Activated CD4-positive, alpha-beta T cell treated with anti-CD3 and anti-CD28 coated beads for 36 hours (primary cell): ENCODE measurements at regions of chr17 and their contacts with region 1.

Region 1: GRCh38 chr17:59512844-59513385 is 52.5 kb upstream of the DHX40 start:
- DNase-seq: no peak
- ATAC-seq: no peak
- H3K4me3 Mint-ChIP-seq: no peak overlapping the region
- H3K27ac Mint-ChIP-seq: no peak overlapping the region
- H3K4me1 Mint-ChIP-seq: no peaks in the 10 kb centered on the region
- H3K27me3 Mint-ChIP-seq: no peaks in the 10 kb centered on the region

Region 2: GRCh38 chr17:58382108-58382871 is 1130.6 kb before region 1 on chr17:
- CTCF ChIA-PET with region 1: no interaction called
- POLR2A ChIA-PET with region 1: interaction called, 11 read pairs
- intact Hi-C with region 1: no loop called
- DNase-seq: no peak
- ATAC-seq: peak; percentile 90
- H3K4me3 Mint-ChIP-seq: no peak overlapping the region
- H3K27ac Mint-ChIP-seq: peak overlapping the region; percentile 44
- H3K4me1 Mint-ChIP-seq: peaks cover 36% of the 10 kb centered on the region
- H3K27me3 Mint-ChIP-seq: no peaks in the 10 kb centered on the region

Region 3: GRCh38 chr17:59469786-59470485 is 43.0 kb before region 1 on chr17:
- CTCF ChIA-PET with region 1: no interaction called
- POLR2A ChIA-PET with region 1: no interaction called
- intact Hi-C with region 1: no loop called
- DNase-seq: no peak
- ATAC-seq: no peak
- H3K4me3 Mint-ChIP-seq: no peak overlapping the region
- H3K27ac Mint-ChIP-seq: no peak overlapping the region
- H3K4me1 Mint-ChIP-seq: peaks cover 4% of the 10 kb centered on the region
- H3K27me3 Mint-ChIP-seq: peaks cover 2% of the 10 kb centered on the region